ENCODE measurements at regions of chr4 and their contacts with region 1.

Region 1: GRCh38 chr4:142347241-142347640 is 498.9 kb downstream of the INPP4B start:
- ATAC-seq: no peak
- H3K4me3 ChIP-seq: no peak overlapping the region
- H3K27ac ChIP-seq: no peak overlapping the region
- H3K4me1 ChIP-seq: peaks cover 34 to 47% of the 10 kb centered on the region in 2 donors

Region 2: DNA sequence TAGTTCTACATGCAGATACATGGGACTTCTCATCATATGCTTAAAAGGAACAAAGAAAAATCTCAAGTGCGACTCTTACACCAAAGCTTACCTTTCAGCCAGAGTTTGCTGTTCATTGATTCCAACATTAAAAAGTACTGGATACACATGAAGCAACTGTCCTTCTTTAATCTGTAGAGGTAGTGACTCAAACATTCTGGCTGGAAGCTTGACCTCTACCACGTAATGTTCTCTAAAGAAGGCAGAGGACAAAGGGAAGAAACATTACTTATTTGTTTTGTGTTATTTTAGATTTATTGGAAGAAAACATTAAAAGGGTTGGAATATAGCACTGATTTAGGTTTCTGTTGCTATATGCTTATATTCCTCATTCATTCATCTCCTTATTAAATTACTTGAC is 234.8 kb before region 1 on chr4:
- in situ Hi-C with region 1: no loop called
- ATAC-seq: no peak
- H3K4me3 ChIP-seq: no peak overlapping the region
- H3K27ac ChIP-seq: no peak overlapping the region
- H3K4me1 ChIP-seq: no peaks in the 10 kb centered on the region

Region 3: GRCh38 chr4:142126890-142127497 is 220.2 kb before region 1 on chr4:
- in situ Hi-C with region 1: loop called in 1 of 9 experiments (anchors 25 kb)
- ATAC-seq: peak; percentile 39 to 79 (median 53)
- H3K4me3 ChIP-seq: no peak overlapping the region
- H3K27ac ChIP-seq: no peak overlapping the region
- H3K4me1 ChIP-seq: no peaks in the 10 kb centered on the region

Region 4: GRCh38 chr4:142781114-142781513 is 433.9 kb after region 1 on chr4:
- in situ Hi-C with region 1: no loop called
- ATAC-seq: peak in 2 of 8 experiments; percentile 17 to 40
- H3K4me3 ChIP-seq: no peak overlapping the region
- H3K27ac ChIP-seq: no peak overlapping the region
- H3K4me1 ChIP-seq: no peaks in the 10 kb centered on the region

Measured in motor neuron (in vitro differentiated cells).